WTC11 (cell line): ENCODE measurements at regions of chr4 and their contacts with region 1.

Region 1: DNA sequence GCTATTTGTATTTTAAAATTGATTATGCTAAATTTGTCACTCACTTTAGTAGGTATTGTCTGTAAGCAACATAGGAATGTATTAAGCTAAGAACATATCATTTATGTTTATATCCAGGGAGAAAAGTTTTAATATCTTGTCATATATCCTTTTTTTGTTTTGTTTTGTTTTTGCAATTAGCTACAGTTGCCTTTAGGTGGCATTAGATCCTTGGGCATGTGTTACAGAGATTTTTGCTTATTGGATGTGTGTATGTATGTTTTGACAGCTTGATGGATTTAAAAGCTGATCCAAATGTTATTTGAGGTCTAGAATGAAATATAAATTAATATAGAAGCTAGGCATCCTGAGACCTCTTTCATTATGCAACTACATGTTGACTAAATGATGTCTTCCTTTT is 36.1 kb upstream of the OTUD4 start:
- DNase-seq: no peak
- ATAC-seq: no peak
- H3K4me3 Mint-ChIP-seq: no peak overlapping the region
- H3K27ac Mint-ChIP-seq: no peak overlapping the region
- H3K4me1 Mint-ChIP-seq: peaks cover 19% of the 10 kb centered on the region
- H3K27me3 Mint-ChIP-seq: no peaks in the 10 kb centered on the region
- CTCF ChIP-seq: no peak

Region 2: GRCh38 chr4:145234091-145234706 is 17.7 kb after region 1 on chr4:
- CTCF ChIA-PET with region 1: interaction called, 16 read pairs
- POLR2A ChIA-PET with region 1: no interaction called
- DNase-seq: peak; percentile 66
- ATAC-seq: peak; percentile 99
- H3K4me3 Mint-ChIP-seq: no peak overlapping the region
- H3K27ac Mint-ChIP-seq: no peak overlapping the region
- H3K4me1 Mint-ChIP-seq: no peaks in the 10 kb centered on the region; the same call in 1 of the 2 replicates
- H3K27me3 Mint-ChIP-seq: no peaks in the 10 kb centered on the region
- CTCF ChIP-seq: peak; percentile 39; the same call in 1 of the 2 replicates

Region 3: DNA sequence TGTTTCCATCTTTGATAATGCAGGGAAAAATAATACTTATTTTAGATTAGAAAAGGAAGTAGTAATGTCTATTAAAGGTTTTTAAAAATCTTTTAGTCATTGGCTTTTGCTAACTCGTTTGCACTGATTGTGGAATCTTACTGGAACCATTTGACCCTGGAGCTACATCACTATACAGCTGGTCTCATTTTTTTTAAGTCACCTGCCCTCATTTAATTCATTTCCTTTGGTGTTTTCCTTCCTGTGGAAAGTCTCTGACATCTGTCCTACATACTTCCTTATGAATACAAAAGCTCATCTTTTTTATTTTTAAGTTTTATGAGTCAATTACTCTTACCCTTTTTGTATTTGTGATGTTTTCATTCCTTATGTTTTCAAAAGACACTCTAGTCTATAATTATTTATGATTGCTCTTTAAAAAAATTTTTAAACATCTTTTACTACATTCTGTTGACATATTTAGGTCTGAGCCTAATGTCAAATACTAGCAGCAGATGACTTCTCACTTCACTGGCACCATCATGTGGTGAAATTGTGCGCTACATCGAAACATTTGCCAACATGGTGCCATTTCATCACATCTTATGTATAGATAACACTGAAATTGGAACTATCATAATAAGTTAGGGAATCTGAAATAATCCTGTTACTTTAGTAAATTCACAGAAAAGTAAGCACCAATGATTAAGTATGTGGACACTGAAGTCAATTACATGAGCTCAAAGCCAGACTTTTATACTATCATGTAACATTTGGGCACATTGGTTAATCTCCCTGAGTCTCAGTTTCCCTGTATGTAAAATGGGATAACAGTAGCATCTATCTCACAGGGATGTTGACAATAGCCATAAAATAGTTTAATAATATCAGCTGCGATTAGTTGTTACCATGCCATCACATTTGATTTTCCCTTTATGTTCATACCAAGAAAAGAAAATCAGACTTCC is 393.2 kb after region 1 on chr4:
- CTCF ChIA-PET with region 1: interaction called, 14 read pairs
- POLR2A ChIA-PET with region 1: no interaction called
- DNase-seq: peak; percentile 71
- ATAC-seq: peak; percentile 65
- H3K4me3 Mint-ChIP-seq: no peak overlapping the region
- H3K27ac Mint-ChIP-seq: no peak overlapping the region
- H3K4me1 Mint-ChIP-seq: peaks cover 7% of the 10 kb centered on the region
- H3K27me3 Mint-ChIP-seq: no peaks in the 10 kb centered on the region; the same call in 1 of the 2 replicates
- CTCF ChIP-seq: peak; percentile 38

Region 4: DNA sequence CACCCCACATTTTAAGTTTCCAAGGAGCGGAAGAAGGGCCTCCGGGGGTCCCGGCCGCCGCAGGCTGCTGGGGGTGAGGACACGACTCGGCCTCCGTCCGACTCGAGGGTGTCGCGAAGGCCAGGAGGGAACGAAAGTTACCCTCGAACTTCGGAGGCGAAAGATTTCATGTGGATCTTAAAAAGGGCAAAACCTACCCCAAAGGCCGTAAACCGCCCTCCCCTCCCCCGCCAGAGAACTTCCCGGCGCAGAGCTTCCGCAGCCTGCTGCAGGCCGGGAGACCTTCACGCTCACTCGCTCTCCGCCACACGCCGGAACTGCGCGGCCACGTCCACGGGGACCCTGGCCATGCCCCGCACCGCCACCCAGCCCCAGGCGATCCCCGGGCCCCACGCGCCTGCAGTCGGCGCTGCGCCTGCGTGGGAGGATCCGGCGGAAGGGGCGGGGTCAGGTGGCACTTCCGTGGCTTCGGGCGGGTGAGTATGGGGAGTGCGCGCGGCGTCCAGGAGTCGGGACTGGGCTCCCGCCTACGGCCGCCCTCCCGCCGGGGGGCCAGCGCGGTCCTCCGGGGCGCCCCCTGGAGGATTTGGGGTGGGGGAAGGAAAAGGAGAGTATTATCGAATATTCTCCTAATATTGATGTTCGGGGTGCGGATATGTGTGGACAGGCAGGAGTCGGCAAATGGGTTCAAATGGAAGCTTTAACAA is 402.6 kb after region 1 on chr4 and contains the start of gene MMAA:
- CTCF ChIA-PET with region 1: interaction called, 10 read pairs
- POLR2A ChIA-PET with region 1: no interaction called
- DNase-seq: peak; percentile 88
- ATAC-seq: peak; percentile 98
- H3K4me3 Mint-ChIP-seq: peak within 1 kb of the TSS; percentile 94
- H3K27ac Mint-ChIP-seq: peak within 1 kb of the TSS; percentile 94
- H3K4me1 Mint-ChIP-seq: peaks cover 39% of the 10 kb centered on the region
- H3K27me3 Mint-ChIP-seq: no peaks in the 10 kb centered on the region
- CTCF ChIP-seq: peak; percentile 69; the same call in 1 of the 2 replicates
- total RNA-seq, gene MMAA: 4.9 to 5.9 TPM (median 5.0 TPM) in 3 replicates